WTC11 (cell line): ENCODE measurements at regions of chr2 and their contacts with region 1.

Region 1: DNA sequence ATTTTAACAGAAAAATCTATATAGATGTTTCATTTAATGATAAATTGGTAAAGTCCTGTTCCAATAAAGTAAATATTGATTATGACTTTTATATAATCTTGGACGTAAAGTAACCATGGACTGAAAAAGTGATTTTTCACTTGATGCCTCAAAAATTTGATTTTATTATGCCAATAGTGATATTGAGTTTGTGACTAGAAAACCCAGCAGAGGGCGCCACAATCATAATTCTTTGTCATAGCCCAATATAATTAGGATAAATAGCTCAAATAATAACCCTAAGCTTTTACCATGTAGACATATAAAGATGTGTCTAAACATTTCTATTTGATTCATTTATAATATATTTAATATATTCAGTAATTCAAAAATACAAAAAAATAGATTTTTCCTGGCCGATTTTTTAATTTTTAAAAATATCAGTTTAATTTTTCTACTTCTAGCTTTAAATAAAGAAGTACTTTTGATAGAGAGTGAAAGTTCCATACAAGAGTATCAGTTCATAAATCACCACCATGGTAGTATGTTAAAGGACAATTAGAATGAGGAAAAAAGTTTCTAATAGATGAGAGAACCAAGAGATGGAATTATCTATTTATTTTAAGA is 30.7 kb downstream of the CAMKMT start:
- DNase-seq: peak; percentile 41
- ATAC-seq: no peak
- H3K4me3 Mint-ChIP-seq: no peak overlapping the region
- H3K27ac Mint-ChIP-seq: no peak overlapping the region
- H3K4me1 Mint-ChIP-seq: peaks cover 29% of the 10 kb centered on the region
- H3K27me3 Mint-ChIP-seq: no peaks in the 10 kb centered on the region
- CTCF ChIP-seq: 0 out of 2 replicates have a peak, but pooled peaks have one; percentile 35

Region 2: DNA sequence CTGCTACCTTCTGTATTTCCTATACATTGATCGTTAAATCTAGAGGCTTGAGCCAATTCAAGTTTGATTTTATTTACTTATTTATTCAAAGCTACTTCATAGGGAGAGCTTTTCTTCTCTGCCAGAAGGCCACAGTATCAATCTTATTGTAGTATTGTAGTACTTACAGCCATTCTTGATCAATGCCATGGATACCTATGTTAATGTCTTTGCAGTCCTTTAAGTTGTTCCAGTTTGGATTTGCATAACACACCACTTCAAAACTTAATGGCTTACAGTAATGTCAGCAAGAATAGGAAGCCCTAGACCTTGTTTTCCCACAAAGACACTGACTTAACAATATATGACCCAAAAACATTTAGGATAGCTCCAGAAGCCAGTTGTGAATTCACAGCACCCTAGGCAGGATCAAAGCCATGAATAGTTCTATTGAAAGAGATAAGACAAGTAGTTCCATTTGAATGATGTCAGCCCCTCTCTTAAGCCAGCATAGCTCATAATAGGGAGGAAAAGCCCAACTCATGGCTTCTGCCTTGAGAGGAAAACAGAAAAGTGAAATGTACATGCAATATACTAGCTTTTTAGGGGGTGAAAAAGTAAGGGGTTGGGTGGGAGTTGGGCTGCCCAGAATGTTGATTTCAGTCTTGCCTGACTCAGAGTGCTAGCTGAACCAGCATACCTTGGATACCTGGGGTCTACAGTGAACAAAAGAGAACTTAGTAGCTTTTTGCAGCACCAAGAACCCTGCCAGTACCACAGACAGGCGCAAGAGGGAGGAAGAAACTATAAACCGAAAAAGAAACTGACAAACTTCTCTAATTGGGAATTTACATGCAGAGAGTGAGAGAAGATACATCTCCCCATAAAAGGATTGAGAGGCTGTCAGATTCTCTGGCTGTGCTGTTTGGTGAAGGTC is 70.8 kb after region 1 on chr2:
- CTCF ChIA-PET with region 1: interaction called, 13 read pairs
- POLR2A ChIA-PET with region 1: no interaction called
- DNase-seq: peak; percentile 34
- ATAC-seq: peak; percentile 98
- H3K4me3 Mint-ChIP-seq: peak overlapping the region; percentile 20
- H3K27ac Mint-ChIP-seq: peak overlapping the region; percentile 97
- H3K4me1 Mint-ChIP-seq: peaks cover 55% of the 10 kb centered on the region
- H3K27me3 Mint-ChIP-seq: no peaks in the 10 kb centered on the region
- CTCF ChIP-seq: no peak

Region 3: GRCh38 chr2:44598746-44599529 is 206.5 kb after region 1 on chr2:
- CTCF ChIA-PET with region 1: no interaction called
- POLR2A ChIA-PET with region 1: no interaction called
- DNase-seq: no peak
- ATAC-seq: no peak
- H3K4me3 Mint-ChIP-seq: no peak overlapping the region
- H3K27ac Mint-ChIP-seq: no peak overlapping the region
- H3K4me1 Mint-ChIP-seq: no peaks in the 10 kb centered on the region
- H3K27me3 Mint-ChIP-seq: no peaks in the 10 kb centered on the region
- CTCF ChIP-seq: no peak